ENCODE measurements at regions of chr5 and their contacts with region 1.

Region 1: GRCh38 chr5:82684659-82685058 is 392.5 kb downstream of the TMEM167A start:
- DNase-seq: no peak

Region 2: DNA sequence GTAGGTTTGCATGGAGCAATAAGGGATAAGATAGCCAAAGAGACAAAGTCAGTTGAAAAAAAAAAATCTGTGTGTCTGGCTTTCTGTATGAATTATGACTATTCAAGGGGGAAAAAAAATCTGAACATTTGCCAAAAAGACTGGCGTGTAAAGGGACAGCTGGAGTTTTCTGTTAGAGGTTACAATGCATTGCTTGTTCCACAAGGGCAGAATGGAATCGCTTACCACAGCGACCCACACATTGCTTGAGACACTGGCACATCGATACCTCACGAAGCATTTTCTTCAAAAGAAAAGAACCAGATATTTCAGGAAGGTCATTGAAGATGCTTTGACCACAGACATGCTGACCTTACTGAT is 64.8 kb after region 1 on chr5:
- in situ Hi-C with region 1: loop called (anchors 5 kb)
- DNase-seq: peak; percentile 9

Region 3: GRCh38 chr5:83104021-83104420 is 419.4 kb after region 1 on chr5:
- in situ Hi-C with region 1: no loop called
- DNase-seq: no peak